Activated CD8-positive, alpha-beta memory T cell treated with anti-CD3 and anti-CD28 coated beads, Interleukin-2, amount 10 ng/mL, durations not matched to agents 7 days and 5 days (primary cell): ENCODE measurements at regions of chr9 and their contacts with region 1.

Region 1: GRCh38 chr9:98207606-98208005 is 15.2 kb upstream of the CORO2A start:
- DNase-seq: no peak
- ATAC-seq: no peak
- H3K4me3 Mint-ChIP-seq: no peak overlapping the region
- H3K27ac Mint-ChIP-seq: no peak overlapping the region
- H3K4me1 Mint-ChIP-seq: peaks cover 4% of the 10 kb centered on the region
- H3K27me3 Mint-ChIP-seq: no peaks in the 10 kb centered on the region

Region 2: DNA sequence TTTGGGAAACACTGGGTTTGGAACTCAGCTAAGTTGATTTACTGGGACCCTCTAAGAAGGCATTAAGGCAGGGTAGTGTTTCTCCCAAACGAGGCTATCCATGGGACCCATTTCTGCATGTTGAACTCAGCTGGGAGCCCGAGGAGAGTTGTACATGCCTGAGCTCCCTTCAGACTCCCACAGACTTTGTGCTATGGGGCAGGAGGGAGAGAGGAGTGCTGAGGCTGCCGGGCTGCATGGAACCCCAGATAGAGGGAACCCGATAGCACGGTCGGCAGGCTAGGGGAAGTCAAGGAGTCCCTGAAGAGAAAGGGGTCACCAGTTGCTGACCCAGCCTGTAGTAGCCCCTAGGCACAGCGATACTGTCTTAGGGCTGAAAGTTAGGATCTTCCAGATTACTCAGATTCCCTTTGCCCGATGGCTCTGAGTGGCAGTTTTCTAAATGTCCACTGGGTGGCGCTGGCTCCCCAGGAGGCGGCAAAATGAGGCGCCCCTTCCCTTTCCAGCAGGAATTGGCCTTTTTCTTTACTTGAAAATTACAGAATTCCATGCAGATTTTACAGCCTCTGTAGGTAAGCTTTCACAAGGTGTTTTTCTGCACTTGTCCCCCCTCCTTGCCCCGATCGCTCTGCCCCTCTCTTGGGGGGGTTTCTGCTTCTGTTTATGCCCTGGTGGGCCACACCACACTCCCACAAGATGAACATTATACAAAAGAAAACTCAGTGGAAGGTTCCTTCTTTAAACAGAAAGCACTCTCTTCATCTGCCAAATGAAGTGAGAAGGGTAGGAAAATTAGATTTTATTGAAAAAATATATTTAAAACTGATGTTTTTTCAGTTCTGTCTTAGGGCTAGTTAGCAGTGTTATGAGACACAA is 133.3 kb before region 1 on chr9:
- CTCF ChIA-PET with region 1: interaction called, 12 read pairs
- DNase-seq: peak; percentile 76
- ATAC-seq: peak; percentile 37
- H3K4me3 Mint-ChIP-seq: no peak overlapping the region
- H3K27ac Mint-ChIP-seq: peak overlapping the region; percentile 88
- H3K4me1 Mint-ChIP-seq: peaks cover 35% of the 10 kb centered on the region
- H3K27me3 Mint-ChIP-seq: no peaks in the 10 kb centered on the region

Region 3: DNA sequence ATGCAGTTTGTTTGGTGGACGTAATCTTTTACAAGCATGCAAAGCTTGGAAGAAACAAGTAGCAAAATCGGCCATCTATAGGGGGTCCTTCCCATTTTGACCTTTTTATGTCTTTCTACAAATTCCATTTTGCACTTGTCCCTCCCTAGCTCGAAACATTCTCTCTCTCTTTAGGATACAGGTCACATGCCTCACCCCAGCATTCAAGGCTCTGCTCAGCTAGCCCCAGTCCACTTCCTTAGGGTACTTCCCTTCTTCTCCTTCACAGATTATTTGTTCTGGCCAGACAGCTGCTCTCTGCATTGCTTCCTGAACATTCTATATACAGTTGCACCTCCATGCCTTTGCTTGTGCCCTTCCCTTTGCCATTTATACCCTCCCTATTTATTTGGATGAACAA is 56.9 kb before region 1 on chr9:
- CTCF ChIA-PET with region 1: no interaction called
- DNase-seq: no peak
- ATAC-seq: no peak
- H3K4me3 Mint-ChIP-seq: no peak overlapping the region
- H3K27ac Mint-ChIP-seq: no peak overlapping the region
- H3K4me1 Mint-ChIP-seq: peaks cover 31% of the 10 kb centered on the region
- H3K27me3 Mint-ChIP-seq: no peaks in the 10 kb centered on the region

Region 4: DNA sequence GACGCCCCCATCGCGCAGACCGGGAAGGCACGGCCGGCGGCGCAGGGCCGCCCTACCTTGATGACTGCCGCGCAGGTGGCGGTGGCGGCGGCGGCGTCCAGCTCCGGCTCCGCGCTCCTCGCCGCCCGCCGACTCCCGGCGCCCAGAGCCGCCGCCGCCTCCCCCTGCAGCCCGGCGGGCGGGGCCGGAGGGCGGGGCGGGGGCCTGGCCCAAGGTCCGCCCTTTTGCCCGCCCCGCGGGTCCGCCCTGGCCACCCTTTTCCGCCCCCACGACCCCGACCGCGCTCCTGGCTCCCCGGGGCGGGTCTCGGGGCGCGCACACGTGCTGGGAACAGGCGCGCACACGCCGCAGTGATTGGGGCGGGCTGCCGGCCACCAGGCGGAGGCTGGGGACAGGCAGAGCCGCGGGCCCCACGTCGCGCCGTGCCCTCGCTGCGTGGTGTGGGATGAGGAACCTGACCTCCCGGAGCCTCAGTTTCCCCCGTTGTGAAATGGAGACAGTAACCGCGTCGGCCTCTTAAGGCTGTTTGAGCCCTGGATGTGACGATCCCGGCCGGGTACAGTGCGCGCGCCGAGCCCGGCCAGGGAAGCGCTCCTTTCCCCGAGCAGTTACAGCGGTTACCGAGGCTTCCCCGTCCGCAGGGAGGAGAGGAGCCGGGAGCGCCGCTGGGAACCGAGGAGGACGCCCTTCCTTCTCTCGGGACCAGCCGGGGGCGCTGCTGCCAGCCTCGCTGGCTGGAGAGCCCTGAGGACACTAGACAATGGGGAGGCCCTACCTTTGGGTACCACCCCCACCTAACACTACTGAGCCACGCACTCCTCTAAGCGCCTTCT is 14.9 kb before region 1 on chr9 and contains the start of gene CORO2A:
- CTCF ChIA-PET with region 1: interaction called, 12 read pairs
- DNase-seq: peak; percentile 80
- ATAC-seq: peak; percentile 88
- H3K4me3 Mint-ChIP-seq: peak within 1 kb of the TSS; percentile 79
- H3K27ac Mint-ChIP-seq: peak within 1 kb of the TSS; percentile 71
- H3K4me1 Mint-ChIP-seq: peaks cover 11% of the 10 kb centered on the region
- H3K27me3 Mint-ChIP-seq: no peaks in the 10 kb centered on the region
- total RNA-seq, gene CORO2A: 6.2 to 11.5 TPM

Region 5: DNA sequence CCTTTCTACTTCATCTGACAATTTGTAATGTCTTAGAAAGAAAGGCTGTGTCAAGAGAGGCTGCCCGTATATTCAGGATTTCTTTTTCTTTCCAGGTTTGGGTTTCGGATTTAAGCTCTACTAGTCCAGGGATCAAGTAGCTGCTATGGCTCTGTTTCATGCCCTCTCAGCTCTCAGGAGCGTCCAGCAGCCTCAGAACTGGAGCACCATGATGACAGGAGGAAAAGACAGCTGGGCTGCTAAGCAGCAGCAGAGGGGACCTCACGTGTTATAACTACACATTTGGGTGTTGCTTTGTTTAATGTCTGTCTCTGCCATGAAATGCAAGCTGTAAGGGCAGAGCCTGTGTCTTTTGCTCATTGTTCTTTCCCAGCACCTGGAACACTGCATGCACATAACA is 19.4 kb after region 1 on chr9:
- CTCF ChIA-PET with region 1: no interaction called
- DNase-seq: no peak
- ATAC-seq: no peak
- H3K4me3 Mint-ChIP-seq: no peak overlapping the region
- H3K27ac Mint-ChIP-seq: no peak overlapping the region
- H3K4me1 Mint-ChIP-seq: peaks cover 4% of the 10 kb centered on the region
- H3K27me3 Mint-ChIP-seq: no peaks in the 10 kb centered on the region

Region 6: DNA sequence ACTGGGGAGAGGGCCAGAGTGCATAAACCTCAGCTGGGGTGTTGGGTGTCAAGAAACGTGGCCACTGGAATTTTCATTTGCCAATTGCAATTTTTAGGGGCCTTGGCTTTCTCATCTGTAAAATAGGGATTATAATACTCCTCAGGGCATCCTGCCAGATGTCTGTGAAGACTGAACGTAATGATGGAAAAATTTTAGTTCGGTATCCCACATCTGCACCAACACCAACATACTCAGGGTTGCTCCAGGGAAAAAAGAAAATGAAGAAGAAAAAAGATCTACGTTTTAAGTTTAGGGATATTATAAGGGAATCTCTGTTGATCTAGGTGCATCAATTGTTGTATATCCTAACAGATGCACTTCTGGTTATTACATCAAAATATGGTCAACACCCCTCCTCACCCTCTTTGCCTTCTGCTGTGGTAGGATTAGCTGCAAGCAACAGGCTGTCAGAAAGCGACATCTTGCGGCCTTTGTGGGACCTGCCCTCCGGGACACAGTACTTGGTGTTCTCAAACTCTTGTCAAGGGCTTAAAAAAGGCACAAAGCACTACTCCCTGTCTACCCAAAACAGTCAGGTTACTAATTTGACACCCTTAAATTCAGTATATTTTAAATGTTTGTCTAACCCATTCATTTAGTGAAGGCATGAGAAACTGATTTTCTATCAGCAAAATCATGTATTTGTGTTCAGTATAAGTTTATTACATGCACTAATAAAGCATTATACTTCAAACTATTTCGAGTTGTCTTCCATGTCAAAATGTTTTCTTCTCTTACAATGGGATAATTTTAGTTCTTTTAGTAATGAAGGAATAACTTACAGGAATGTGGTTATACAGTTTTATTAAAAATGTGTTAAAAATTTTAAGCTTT is 56.1 kb after region 1 on chr9:
- CTCF ChIA-PET with region 1: interaction called, 38 read pairs
- DNase-seq: peak; percentile 92
- ATAC-seq: peak; percentile 100
- H3K4me3 Mint-ChIP-seq: no peak overlapping the region
- H3K27ac Mint-ChIP-seq: no peak overlapping the region
- H3K4me1 Mint-ChIP-seq: peaks cover 5% of the 10 kb centered on the region
- H3K27me3 Mint-ChIP-seq: peaks cover 16% of the 10 kb centered on the region

Region 7: GRCh38 chr9:98410185-98410697 is 202.6 kb after region 1 on chr9:
- CTCF ChIA-PET with region 1: no interaction called
- DNase-seq: no peak
- ATAC-seq: no peak
- H3K4me3 Mint-ChIP-seq: no peak overlapping the region
- H3K27ac Mint-ChIP-seq: no peak overlapping the region
- H3K4me1 Mint-ChIP-seq: peaks cover 3% of the 10 kb centered on the region
- H3K27me3 Mint-ChIP-seq: peaks cover 28% of the 10 kb centered on the region